Dendritic cell treated with granulocyte-macrophage colony-stimulating factor and Interleukin-4, amounts not matched to agents 40 ng/mL and 50 ng/mL, for 4 days (primary cell): ENCODE measurements at regions of chr20 and their contacts with region 1.

Region 1: GRCh38 chr20:46022411-46023147 is 6.4 kb upstream of the SLC12A5 start:
- H3K4me3 Mint-ChIP-seq: peak overlapping the region; percentile 83
- H3K27ac Mint-ChIP-seq: no peak overlapping the region
- H3K4me1 Mint-ChIP-seq: peaks cover 56% of the 10 kb centered on the region
- H3K27me3 Mint-ChIP-seq: peaks cover 73% of the 10 kb centered on the region

Region 2: GRCh38 chr20:45508068-45508886 is 514.3 kb before region 1 on chr20:
- intact Hi-C with region 1: no loop called
- H3K4me3 Mint-ChIP-seq: no peak overlapping the region
- H3K27ac Mint-ChIP-seq: no peak overlapping the region
- H3K4me1 Mint-ChIP-seq: no peaks in the 10 kb centered on the region
- H3K27me3 Mint-ChIP-seq: peaks cover 21% of the 10 kb centered on the region

Region 3: DNA sequence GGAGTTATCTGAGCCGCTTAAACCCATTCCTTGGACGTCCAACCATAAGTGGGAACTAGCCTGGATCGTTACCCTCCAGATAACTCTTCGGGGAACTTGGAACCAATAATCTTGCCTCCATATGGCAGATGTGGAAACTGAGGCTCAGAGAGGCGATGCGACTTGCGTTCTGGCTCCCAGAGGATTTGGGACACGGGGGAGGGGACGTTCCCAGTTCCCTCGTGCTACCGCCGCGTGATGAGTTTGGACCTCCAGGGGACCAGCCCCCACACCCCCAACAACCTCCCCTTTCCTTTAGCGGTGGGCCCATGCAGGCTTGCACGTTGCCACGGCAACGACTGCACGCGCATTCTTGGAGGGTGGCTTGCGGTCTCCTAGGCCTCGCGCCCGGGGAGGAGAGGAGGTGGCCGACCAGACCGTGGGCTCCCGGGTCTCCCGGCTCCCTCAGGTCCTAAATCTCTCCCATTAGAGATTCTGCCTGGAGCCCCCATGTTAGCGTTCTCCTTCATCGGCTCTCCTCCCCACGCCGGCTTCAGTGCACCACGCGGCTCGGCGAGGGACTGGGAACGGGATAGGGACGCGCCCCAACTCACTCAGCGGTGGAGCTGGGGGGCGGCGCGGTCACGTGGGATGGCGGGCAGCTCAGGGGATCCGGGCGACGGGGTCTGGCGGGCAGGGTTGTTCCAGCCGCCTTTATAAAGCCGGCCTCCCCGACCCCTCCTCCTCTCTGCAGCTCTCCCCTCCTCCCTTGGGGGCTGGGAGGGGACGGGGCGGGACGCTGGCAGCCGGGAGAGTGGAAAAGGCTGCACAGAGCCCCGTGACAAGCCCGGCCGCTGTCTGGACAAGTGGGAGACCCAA is 110.9 kb before region 1 on chr20 and contains the start of gene PLTP:
- intact Hi-C with region 1: no loop called
- H3K4me3 Mint-ChIP-seq: peak within 1 kb of the TSS; percentile 73
- H3K27ac Mint-ChIP-seq: peak within 1 kb of the TSS; percentile 87
- H3K4me1 Mint-ChIP-seq: peaks cover 55% of the 10 kb centered on the region
- H3K27me3 Mint-ChIP-seq: peaks cover 5% of the 10 kb centered on the region

Region 4: GRCh38 chr20:46040902-46041535 is 18.4 kb after region 1 on chr20:
- intact Hi-C with region 1: loop called (anchors 2 kb)
- H3K4me3 Mint-ChIP-seq: no peak overlapping the region
- H3K27ac Mint-ChIP-seq: no peak overlapping the region
- H3K4me1 Mint-ChIP-seq: no peaks in the 10 kb centered on the region
- H3K27me3 Mint-ChIP-seq: peaks cover 60% of the 10 kb centered on the region

Region 5: GRCh38 chr20:46057856-46058598 is 35.4 kb after region 1 on chr20:
- intact Hi-C with region 1: loop called (anchors 2 kb)
- H3K4me3 Mint-ChIP-seq: peak overlapping the region; percentile 77
- H3K27ac Mint-ChIP-seq: peak overlapping the region; percentile 85
- H3K4me1 Mint-ChIP-seq: peaks cover 62% of the 10 kb centered on the region
- H3K27me3 Mint-ChIP-seq: peaks cover 45% of the 10 kb centered on the region

Region 6: DNA sequence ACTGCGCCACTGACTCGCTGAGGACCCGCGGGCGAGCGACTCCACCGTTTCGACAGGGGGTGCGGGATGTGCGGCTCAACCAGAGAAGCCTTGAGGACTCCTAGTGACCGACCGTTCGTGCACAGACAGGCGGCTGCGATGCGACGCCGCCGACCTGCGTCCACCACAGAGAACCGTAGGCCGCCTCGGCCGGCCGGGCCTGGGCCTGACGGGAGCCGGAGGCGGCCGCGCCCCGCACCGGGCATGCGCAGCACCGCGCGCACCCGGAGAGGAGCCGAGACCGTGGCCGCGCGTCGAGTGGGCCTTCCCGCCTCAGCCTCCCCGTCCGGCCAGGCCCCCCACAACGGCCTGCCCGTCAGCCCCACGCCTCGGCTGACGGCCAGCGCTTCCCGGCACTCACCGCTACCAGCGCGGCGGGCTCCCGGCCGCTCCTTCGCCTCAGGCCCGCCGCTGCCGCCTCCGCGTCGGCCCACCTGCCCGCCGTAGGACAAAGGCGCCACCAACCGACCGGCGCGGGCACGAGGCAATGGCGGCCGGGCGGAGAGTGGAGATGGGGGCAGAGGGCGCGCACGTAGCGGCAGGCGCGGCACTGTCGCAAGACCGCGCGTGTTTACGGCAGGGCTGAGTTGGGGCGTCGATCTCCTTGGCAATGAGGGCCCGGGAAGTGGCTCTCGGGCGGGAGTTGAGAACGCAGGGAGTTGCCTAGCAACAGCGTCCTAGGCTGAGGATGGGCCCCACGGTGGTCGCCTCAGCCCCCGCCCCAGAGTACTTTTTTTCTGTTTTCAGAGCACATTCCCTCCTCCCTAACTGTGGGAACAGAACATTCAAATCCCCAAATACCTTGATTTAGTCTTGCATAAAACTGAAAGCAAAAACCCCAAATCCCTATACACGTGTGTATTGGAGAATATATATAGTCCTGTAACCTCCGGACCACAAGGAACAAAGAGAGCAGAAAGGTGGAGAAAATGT is 67.1 kb after region 1 on chr20 and contains the start of gene NCOA5:
- intact Hi-C with region 1: loop called (anchors 2 kb)
- H3K4me3 Mint-ChIP-seq: peak within 1 kb of the TSS; percentile 90
- H3K27ac Mint-ChIP-seq: peak within 1 kb of the TSS; percentile 96
- H3K4me1 Mint-ChIP-seq: peaks cover 38% of the 10 kb centered on the region
- H3K27me3 Mint-ChIP-seq: peaks cover 6% of the 10 kb centered on the region

Region 7: DNA sequence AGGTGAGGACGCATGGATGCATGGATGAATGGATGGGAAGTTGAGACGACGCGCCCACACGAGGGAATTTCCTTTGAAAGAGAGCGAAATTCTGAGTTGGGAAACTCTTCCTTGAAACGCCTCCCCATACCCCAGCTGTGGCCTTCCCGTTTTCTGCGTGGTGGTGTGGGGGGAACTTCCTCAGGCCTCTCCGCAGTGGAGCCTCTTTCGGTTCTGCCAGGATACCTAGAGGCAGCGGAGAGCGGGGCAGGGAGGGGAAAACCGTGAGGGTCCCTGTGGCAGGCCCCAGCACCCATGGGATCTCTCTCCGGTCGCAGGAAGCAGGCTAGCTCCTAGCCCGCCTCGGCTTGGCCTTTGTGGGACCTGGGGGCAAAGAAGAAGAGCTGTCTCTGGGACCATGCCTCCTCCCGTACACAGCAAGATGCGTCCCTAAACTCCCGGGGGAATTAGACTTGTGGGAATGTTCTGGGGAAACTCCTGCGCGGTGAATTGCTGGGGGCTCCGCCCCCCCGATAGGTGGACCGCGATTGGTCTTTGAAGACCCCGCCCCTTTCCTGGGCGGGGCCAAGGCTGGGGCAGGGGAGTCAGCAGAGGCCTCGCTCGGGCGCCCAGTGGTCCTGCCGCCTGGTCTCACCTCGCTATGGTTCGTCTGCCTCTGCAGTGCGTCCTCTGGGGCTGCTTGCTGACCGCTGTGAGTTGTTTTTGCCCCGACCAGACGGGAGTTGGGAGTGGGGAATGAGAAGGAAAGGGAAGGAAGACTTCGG is 95.3 kb after region 1 on chr20 and contains the start of gene CD40:
- intact Hi-C with region 1: loop called (anchors 10 kb)
- H3K4me3 Mint-ChIP-seq: peak within 1 kb of the TSS; percentile 98
- H3K27ac Mint-ChIP-seq: peak within 1 kb of the TSS; percentile 89
- H3K4me1 Mint-ChIP-seq: peaks cover 75% of the 10 kb centered on the region
- H3K27me3 Mint-ChIP-seq: peaks cover 7% of the 10 kb centered on the region